Left cardiac atrium (tissue), 4 donors: ENCODE measurements at regions of chr10 and their contacts with region 1.

Region 1: GRCh38 chr10:116287906-116288501 is 15.0 kb upstream of the GFRA1 start:
- DNase-seq: peak; percentile 28
- ATAC-seq: no peak

Region 2: DNA sequence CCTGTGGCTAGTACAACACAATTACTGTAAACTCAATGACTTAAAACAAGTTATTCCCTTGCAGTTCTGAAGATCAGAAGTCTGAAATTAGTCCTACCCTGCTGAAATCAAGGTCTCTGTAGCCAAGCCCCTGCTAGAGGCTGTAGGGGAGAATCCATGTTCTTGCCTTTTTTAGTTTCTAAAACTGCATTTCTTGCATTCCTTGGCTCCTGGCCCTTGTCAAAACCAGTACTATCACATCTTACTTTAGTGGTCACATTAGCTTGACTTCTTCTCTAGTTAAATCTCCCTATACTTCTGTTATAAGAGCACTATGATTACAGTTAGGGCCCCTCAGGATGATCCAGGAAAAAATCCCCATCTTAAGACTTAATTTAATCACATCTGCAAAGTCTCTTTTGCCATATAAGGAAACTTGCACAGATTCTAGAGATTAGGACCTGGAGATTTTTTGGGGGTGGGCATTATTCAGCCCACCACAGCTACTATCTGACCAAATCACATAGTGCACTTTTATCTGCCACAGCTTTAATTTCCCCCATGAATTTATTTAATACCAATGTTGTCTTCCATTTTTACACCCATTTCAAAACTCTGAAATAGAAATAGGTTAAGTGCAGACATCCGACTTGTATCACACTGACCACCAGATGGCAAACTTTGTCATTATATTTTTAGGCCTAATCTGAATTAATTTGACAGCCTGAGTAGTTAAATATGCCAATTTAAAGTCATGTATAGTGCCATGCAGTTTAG is 581.8 kb before region 1 on chr10:
- intact Hi-C with region 1: loop called (anchors 5 to 10 kb)
- DNase-seq: no peak
- ATAC-seq: no peak

Region 3: DNA sequence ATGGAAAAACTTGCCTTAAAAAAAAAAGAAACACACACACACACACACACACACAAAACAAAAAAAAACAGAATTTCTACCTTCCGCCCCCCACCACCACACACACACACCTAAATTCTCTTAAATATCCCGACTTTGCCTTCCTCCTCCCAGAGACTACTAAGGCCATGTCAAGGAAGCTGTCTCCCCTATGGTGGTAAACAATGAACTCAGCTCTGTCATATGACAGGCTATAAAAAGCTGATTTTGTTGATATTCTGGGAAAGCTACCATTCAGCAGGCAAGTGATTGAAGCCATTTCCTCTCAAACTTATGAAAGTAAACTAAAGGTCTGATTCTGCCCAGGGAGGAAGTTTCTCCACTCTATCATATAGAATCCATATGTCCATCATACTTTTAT is 486.0 kb before region 1 on chr10:
- intact Hi-C with region 1: loop called (anchors 2 to 10 kb)
- DNase-seq: no peak
- ATAC-seq: no peak